ENCODE measurements at regions of chr11 and their contacts with region 1.

Region 1: GRCh38 chr11:124875943-124876817 is 10.9 kb downstream of the ROBO3 start:
- DNase-seq: peak; percentile 91
- ATAC-seq: peak; percentile 93
- H3K4me3 ChIP-seq: peak overlapping the region; percentile 76
- H3K27ac ChIP-seq: peak overlapping the region; percentile 61
- H3K4me1 ChIP-seq: peaks cover 12% of the 10 kb centered on the region
- H3K27me3 ChIP-seq: no peaks in the 10 kb centered on the region
- CTCF ChIP-seq: peak; percentile 94

Region 2: DNA sequence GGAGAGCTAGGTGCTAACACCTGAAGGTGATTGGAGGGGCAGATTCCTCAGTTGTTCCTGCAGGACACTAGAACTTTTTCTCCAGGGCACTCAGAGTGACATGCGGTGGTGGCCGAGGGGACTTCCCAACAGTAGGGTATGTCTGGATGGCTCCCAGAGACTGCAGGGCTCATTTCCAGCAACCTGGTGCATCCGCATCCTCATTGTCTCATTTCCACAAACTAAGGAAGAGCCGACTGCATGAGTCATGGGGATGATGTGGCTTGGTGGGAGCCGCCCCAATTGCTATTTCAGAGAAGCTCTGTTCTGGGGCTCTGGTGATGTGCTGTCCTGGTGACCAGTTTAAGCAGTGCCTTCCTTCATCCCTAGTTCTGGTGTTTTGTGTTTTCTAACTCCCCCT is 24.3 kb after region 1 on chr11:
- CTCF ChIA-PET with region 1: interaction called, 20 read pairs
- POLR2A ChIA-PET with region 1: interaction called, 17 read pairs
- intact Hi-C with region 1: loop called (anchors 1 kb)
- DNase-seq: peak; percentile 98
- ATAC-seq: peak; percentile 60
- H3K4me3 ChIP-seq: peak overlapping the region; percentile 41; the same call in 1 of the 2 replicates
- H3K27ac ChIP-seq: peak overlapping the region; percentile 88
- H3K4me1 ChIP-seq: peaks cover 73% of the 10 kb centered on the region
- H3K27me3 ChIP-seq: no peaks in the 10 kb centered on the region
- CTCF ChIP-seq: no peak